ENCODE measurements at regions of chr13 and their contacts with region 1.

Region 1: DNA sequence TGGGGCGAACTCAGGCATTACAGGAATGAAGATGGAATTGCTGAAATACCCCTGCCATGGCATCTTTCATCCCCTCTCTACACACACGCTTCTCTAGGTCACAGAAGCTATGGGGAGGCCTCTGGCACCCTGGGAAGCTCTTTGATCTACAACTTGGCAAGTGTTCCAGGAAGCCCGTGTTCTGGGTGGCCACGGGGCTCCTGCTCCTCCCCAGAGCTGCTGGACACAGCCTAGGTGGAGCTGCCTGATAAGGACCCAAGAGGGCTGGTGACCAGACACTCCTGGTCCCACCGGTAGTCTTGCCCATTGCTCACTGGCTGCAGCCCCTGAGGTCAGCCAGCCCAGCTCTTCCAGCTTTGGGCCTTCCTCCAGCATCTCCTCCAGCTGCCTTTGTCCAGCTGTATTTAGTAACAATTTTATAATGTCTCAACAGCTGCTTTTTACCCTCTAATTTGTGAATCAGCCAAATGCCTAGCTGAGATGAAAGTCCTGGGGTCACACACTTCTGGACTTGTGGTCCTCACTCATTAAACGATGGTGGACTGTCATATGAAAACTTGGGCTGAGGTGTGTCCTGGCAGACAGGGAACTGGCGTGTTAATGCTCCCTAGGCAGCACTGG is 72.8 kb upstream of the SPATA13 start:
- DNase-seq: no peak
- ATAC-seq: no peak
- H3K4me3 ChIP-seq: no peak overlapping the region
- H3K27ac ChIP-seq: no peak overlapping the region
- H3K4me1 ChIP-seq: peaks cover 3% of the 10 kb centered on the region
- H3K27me3 ChIP-seq: no peaks in the 10 kb centered on the region; the same call in 1 of the 2 replicates
- CTCF ChIP-seq: no peak
- POLR2A ChIP-seq: no peak
- RAD21 ChIP-seq: no peak

Region 2: GRCh38 chr13:23842406-23842805 is 245.3 kb before region 1 on chr13:
- CTCF ChIA-PET with region 1: no interaction called
- POLR2A ChIA-PET with region 1: no interaction called
- dilution Hi-C with region 1: no loop called
- in situ Hi-C with region 1: no loop called
- intact Hi-C with region 1: no loop called
- DNase-seq: no peak
- ATAC-seq: no peak
- H3K4me3 ChIP-seq: no peak overlapping the region
- H3K27ac ChIP-seq: no peak overlapping the region
- H3K4me1 ChIP-seq: no peaks in the 10 kb centered on the region
- H3K27me3 ChIP-seq: no peaks in the 10 kb centered on the region
- CTCF ChIP-seq: no peak
- POLR2A ChIP-seq: no peak
- RAD21 ChIP-seq: no peak

Region 3: DNA sequence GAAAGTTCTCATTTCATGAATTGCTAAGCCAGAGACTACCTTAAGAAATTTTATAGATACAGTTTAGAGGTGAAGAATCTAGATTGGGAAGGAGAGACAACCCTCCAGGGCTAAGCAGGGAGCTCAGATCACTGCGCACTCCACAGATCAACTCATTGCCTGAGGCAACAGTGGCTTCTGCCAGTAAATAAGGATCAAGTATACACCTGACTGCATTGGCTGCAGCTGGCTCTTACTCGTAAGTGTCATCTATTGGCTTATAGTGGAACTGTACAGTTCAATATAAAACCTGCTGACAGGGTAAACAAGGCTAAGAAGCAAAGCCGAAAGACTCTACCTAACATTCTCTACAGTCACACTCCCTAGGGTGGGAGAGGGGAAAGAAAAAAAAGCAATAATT is 172.4 kb before region 1 on chr13:
- CTCF ChIA-PET with region 1: no interaction called
- POLR2A ChIA-PET with region 1: no interaction called
- dilution Hi-C with region 1: no loop called
- in situ Hi-C with region 1: no loop called
- intact Hi-C with region 1: no loop called
- DNase-seq: no peak
- ATAC-seq: no peak
- H3K4me3 ChIP-seq: no peak overlapping the region
- H3K27ac ChIP-seq: no peak overlapping the region
- H3K4me1 ChIP-seq: no peaks in the 10 kb centered on the region
- H3K27me3 ChIP-seq: no peaks in the 10 kb centered on the region
- CTCF ChIP-seq: no peak
- POLR2A ChIP-seq: no peak
- RAD21 ChIP-seq: no peak

Region 4: DNA sequence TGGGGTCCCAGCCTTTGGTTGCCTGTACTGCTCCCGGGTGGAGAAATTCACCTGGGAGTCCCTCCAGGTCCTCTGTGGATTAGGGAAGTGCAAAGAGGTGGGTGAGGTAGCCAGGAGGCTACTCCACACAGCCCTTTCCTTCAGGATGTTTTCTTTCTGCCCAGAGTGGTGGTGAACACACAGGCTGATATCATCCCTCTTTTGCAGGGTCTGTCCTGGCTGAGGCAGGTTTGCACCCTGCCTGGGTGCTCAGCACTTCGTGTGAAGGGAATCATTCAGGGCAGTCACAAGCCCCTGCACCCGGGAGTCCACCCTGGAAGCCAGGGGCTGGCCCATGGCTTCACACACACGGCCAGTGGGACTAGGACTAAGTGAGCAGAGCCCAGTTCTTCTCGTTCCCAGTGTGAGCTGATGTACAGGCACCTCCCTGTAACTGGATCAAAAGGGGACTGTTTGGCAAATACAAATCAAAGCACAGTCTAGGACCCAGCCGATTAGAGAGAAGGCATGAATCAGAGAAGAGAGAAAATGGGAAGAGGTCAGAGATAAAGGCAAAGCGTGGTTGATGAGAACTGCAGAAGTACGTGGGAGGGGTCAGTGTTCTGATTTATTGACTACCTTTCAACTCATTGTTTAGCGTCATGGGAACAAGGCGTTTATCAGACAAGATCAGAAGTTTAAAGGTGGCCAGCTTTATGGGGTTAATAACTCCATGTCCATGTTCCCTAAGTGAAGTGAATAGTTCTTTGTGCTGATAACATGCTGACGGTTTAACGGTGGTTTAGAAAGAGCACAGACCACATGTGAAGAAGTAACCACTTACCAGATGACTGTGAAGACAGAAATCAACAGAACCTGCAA is 42.4 kb after region 1 on chr13:
- CTCF ChIA-PET with region 1: no interaction called
- POLR2A ChIA-PET with region 1: no interaction called
- dilution Hi-C with region 1: no loop called
- in situ Hi-C with region 1: no loop called
- intact Hi-C with region 1: loop called (anchors 5 kb)
- DNase-seq: peak; percentile 13
- ATAC-seq: no peak
- H3K4me3 ChIP-seq: no peak overlapping the region
- H3K27ac ChIP-seq: no peak overlapping the region
- H3K4me1 ChIP-seq: peaks cover 7% of the 10 kb centered on the region
- H3K27me3 ChIP-seq: no peaks in the 10 kb centered on the region; the same call in 1 of the 2 replicates
- CTCF ChIP-seq: no peak
- POLR2A ChIP-seq: no peak
- RAD21 ChIP-seq: no peak

Region 5: GRCh38 chr13:24341439-24341838 is 253.7 kb after region 1 on chr13:
- CTCF ChIA-PET with region 1: no interaction called
- POLR2A ChIA-PET with region 1: no interaction called
- dilution Hi-C with region 1: no loop called
- in situ Hi-C with region 1: no loop called
- intact Hi-C with region 1: no loop called
- DNase-seq: peak; percentile 46
- ATAC-seq: peak; percentile 73
- H3K4me3 ChIP-seq: no peak overlapping the region
- H3K27ac ChIP-seq: no peak overlapping the region
- H3K4me1 ChIP-seq: peaks cover 2% of the 10 kb centered on the region; the same call in 1 of the 2 replicates
- H3K27me3 ChIP-seq: no peaks in the 10 kb centered on the region
- CTCF ChIP-seq: no peak
- POLR2A ChIP-seq: no peak
- RAD21 ChIP-seq: no peak

Measured in IMR-90 (cell line).